Mammary epithelial cell (primary cell): ENCODE measurements at regions of chr1 and their contacts with region 1.

Region 1: GRCh38 chr1:109923131-109923945 is 12.7 kb downstream of the CSF1 start:
- DNase-seq: no peak
- H3K4me3 ChIP-seq: no peak overlapping the region
- H3K27ac ChIP-seq: no peak overlapping the region
- H3K4me1 ChIP-seq: peaks cover 27% of the 10 kb centered on the region
- H3K27me3 ChIP-seq: no peaks in the 10 kb centered on the region
- CTCF ChIP-seq: peak; percentile 37

Region 2: DNA sequence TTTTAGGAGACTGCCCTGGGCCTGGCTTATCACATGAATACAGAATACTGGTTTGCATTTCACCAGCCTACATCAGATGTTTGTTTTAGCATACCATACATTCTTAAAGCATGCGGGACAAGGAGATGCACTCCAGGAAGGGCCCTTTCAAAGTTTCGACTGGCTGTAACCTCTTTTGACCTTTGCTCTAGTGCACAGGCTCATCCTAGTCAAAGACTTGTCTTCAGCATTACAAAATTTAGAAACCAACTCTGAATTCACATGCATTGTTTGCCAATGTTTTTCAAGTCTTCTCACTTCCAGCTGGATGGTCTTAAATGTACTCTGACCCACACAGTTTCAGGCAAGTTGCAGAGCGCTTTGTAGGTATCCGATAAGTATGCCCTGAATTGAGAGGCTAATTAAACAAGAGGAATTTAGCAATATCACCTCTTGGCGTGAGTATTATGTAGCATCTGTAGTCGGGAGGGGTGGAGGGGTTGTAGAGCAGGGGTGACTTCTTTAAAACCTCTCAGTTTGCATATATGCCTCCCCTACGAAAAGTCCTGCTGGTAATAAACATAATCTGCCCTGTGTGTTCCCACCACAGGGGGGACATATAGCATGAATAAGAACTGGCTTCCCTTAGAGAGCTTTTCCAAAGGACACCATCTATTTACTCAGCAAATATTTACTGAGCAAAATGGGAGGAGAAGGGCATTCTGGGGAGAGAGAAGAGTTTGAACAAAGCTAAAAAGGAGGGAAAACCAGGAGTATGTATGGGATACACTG is 36.8 kb after region 1 on chr1:
- CTCF ChIA-PET with region 1: no interaction called
- dilution Hi-C with region 1: no loop called
- in situ Hi-C with region 1: no loop called
- intact Hi-C with region 1: loop called (anchors 5 kb)
- DNase-seq: peak; percentile 14
- H3K4me3 ChIP-seq: no peak overlapping the region
- H3K27ac ChIP-seq: no peak overlapping the region
- H3K4me1 ChIP-seq: peaks cover 22% of the 10 kb centered on the region
- H3K27me3 ChIP-seq: no peaks in the 10 kb centered on the region
- CTCF ChIP-seq: no peak

Region 3: DNA sequence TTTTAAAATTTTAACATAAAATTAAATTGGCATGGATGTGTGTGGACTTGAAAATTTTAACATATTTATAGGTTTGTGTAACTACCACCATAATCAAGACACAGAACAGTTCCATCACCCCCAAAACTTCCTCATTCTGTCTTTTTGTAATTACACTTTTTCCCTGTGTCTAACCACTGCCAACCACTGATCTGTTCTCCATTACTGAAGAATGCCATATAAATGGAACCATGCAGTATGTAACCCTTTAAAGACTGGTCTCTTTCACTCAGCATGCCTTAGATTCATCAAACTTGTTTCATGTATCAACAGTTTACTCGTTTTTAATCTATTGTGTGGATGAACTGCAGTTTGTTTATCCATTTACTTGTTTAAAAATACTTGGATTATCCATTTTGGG is 48.2 kb after region 1 on chr1:
- CTCF ChIA-PET with region 1: no interaction called
- dilution Hi-C with region 1: loop called (anchors 5 kb)
- in situ Hi-C with region 1: loop called in 1 of 2 experiments (anchors 10 kb)
- intact Hi-C with region 1: no loop called
- DNase-seq: no peak
- H3K4me3 ChIP-seq: no peak overlapping the region
- H3K27ac ChIP-seq: no peak overlapping the region
- H3K4me1 ChIP-seq: peaks cover 39% of the 10 kb centered on the region
- H3K27me3 ChIP-seq: no peaks in the 10 kb centered on the region
- CTCF ChIP-seq: no peak

Region 4: GRCh38 chr1:110019770-110020169 is 96.4 kb after region 1 on chr1:
- CTCF ChIA-PET with region 1: no interaction called
- dilution Hi-C with region 1: loop called (anchors 5 kb)
- in situ Hi-C with region 1: no loop called
- intact Hi-C with region 1: no loop called
- DNase-seq: no peak
- H3K4me3 ChIP-seq: no peak overlapping the region
- H3K27ac ChIP-seq: no peak overlapping the region
- H3K4me1 ChIP-seq: no peaks in the 10 kb centered on the region
- H3K27me3 ChIP-seq: no peaks in the 10 kb centered on the region
- CTCF ChIP-seq: no peak

Region 5: GRCh38 chr1:110262846-110263631 is 339.7 kb after region 1 on chr1:
- CTCF ChIA-PET with region 1: no interaction called
- dilution Hi-C with region 1: no loop called
- in situ Hi-C with region 1: no loop called
- intact Hi-C with region 1: no loop called
- DNase-seq: no peak
- H3K4me3 ChIP-seq: no peak overlapping the region
- H3K27ac ChIP-seq: no peak overlapping the region
- H3K4me1 ChIP-seq: peaks cover 20% of the 10 kb centered on the region
- H3K27me3 ChIP-seq: no peaks in the 10 kb centered on the region
- CTCF ChIP-seq: no peak